ENCODE measurements at regions of chr21 and their contacts with region 1.

Region 1: DNA sequence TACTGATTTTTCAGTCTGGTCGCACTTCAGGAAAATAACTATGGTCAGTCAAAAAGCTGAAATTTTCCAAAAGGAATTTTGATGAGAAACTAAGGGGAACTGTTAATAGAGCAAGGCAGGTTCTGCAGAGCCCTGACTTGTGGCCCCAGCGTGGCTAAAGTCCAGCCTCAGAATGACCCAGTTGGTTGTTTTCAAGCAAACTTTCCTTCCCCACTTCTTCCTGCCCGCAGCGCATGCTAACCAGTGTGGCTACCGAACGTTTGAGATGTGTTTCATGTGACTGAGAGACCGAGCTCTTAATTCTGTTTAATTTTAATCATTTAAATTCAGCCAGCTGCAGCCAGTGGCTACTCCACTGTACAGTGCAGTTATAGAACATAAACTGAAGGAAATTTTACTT is 6.2 kb upstream of the IL10RB start:
- DNase-seq: no peak
- ATAC-seq: no peak
- H3K4me3 Mint-ChIP-seq: no peak overlapping the region
- H3K27ac Mint-ChIP-seq: no peak overlapping the region
- H3K4me1 Mint-ChIP-seq: peaks cover 51% of the 10 kb centered on the region
- H3K27me3 Mint-ChIP-seq: no peaks in the 10 kb centered on the region

Region 2: GRCh38 chr21:33238565-33239255 is 21.3 kb before region 1 on chr21:
- CTCF ChIA-PET with region 1: interaction called, 4 read pairs
- POLR2A ChIA-PET with region 1: interaction called, 3 read pairs
- intact Hi-C with region 1: loop called (anchors 1 to 2 kb)
- DNase-seq: peak; percentile 37
- ATAC-seq: peak; percentile 59
- H3K4me3 Mint-ChIP-seq: peak overlapping the region; percentile 44
- H3K27ac Mint-ChIP-seq: peak overlapping the region; percentile 90
- H3K4me1 Mint-ChIP-seq: peaks cover 84% of the 10 kb centered on the region
- H3K27me3 Mint-ChIP-seq: no peaks in the 10 kb centered on the region

Region 3: DNA sequence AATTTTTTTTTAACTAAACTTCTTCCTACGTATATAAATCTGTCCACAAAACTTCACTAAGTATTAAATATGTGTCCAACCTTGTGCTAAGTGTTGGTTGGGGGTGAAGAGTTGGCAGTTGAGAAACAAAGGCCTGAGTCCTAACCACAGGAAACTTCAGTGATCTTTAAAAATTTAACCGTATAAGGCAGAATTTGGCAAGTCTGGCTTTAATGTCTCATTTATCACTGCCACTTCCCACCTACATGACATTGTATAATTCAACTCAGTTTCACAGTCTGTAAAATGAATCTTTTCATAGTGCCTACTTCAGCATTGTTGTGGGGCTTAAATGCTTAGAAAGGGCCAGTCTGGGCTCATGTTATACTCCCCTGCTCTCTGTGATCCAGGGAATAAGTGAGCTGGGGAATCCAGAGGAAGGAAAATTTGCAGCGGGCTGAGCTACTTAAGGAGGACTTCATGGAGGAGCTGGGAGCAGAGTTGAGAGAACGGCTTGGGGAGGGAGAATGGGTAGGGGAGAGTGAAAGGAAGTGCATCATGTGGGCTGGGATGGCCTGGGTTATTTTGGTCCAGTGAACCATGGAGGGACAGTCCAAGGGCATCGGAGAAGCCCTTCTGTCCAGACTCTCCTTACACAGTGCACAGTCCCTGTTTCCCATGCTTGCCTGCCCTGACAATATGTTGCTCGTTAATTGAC is 15.8 kb before region 1 on chr21:
- CTCF ChIA-PET with region 1: interaction called, 5 read pairs
- POLR2A ChIA-PET with region 1: no interaction called
- intact Hi-C with region 1: loop called (anchors 1 to 2 kb)
- DNase-seq: no peak
- ATAC-seq: peak; percentile 63
- H3K4me3 Mint-ChIP-seq: peak overlapping the region; percentile 37
- H3K27ac Mint-ChIP-seq: peak overlapping the region; percentile 89
- H3K4me1 Mint-ChIP-seq: peaks cover 87% of the 10 kb centered on the region
- H3K27me3 Mint-ChIP-seq: no peaks in the 10 kb centered on the region